ENCODE measurements at regions of chr1 and their contacts with region 1.

Region 1: GRCh38 chr1:84944767-84945486 is 51.9 kb upstream of the LPAR3 start:
- DNase-seq: peak; percentile 22 to 97 (median 73)
- ATAC-seq: peak; percentile 91
- H3K4me3 ChIP-seq: peak overlapping the region; percentile 54 to 75
- H3K4me3 Mint-ChIP-seq: peak overlapping the region; percentile 89
- H3K27ac ChIP-seq: peak overlapping the region; percentile 82 to 85
- H3K27ac Mint-ChIP-seq: peak overlapping the region; percentile 98
- H3K4me1 ChIP-seq: peaks cover 4% of the 10 kb centered on the region
- H3K4me1 Mint-ChIP-seq: peaks cover 16% of the 10 kb centered on the region
- H3K27me3 ChIP-seq: no peaks in the 10 kb centered on the region
- H3K27me3 Mint-ChIP-seq: no peaks in the 10 kb centered on the region
- CTCF ChIP-seq: peak; percentile 98

Region 2: GRCh38 chr1:84959294-84959693 is 14.4 kb after region 1 on chr1:
- CTCF ChIA-PET with region 1: interaction called, 12 read pairs
- POLR2A ChIA-PET with region 1: interaction called, 3 read pairs
- intact Hi-C with region 1: no loop called
- DNase-seq: peak in 2 of 9 experiments; percentile 35 to 75
- ATAC-seq: peak; percentile 73
- H3K4me3 ChIP-seq: no peak overlapping the region
- H3K4me3 Mint-ChIP-seq: no peak overlapping the region
- H3K27ac ChIP-seq: no peak overlapping the region
- H3K27ac Mint-ChIP-seq: no peak overlapping the region
- H3K4me1 ChIP-seq: no peaks in the 10 kb centered on the region
- H3K4me1 Mint-ChIP-seq: peaks cover 3% of the 10 kb centered on the region
- H3K27me3 ChIP-seq: no peaks in the 10 kb centered on the region
- H3K27me3 Mint-ChIP-seq: no peaks in the 10 kb centered on the region
- CTCF ChIP-seq: no peak

Region 3: GRCh38 chr1:85033221-85033620 is 88.3 kb after region 1 on chr1:
- CTCF ChIA-PET with region 1: interaction called, 123 read pairs
- POLR2A ChIA-PET with region 1: interaction called, 30 read pairs
- intact Hi-C with region 1: loop called in 1 of 2 experiments (anchors 1 kb)
- DNase-seq: no peak
- ATAC-seq: no peak
- H3K4me3 ChIP-seq: no peak overlapping the region
- H3K4me3 Mint-ChIP-seq: no peak overlapping the region
- H3K27ac ChIP-seq: no peak overlapping the region
- H3K27ac Mint-ChIP-seq: no peak overlapping the region
- H3K4me1 ChIP-seq: no peaks in the 10 kb centered on the region
- H3K4me1 Mint-ChIP-seq: no peaks in the 10 kb centered on the region
- H3K27me3 ChIP-seq: no peaks in the 10 kb centered on the region
- H3K27me3 Mint-ChIP-seq: peaks cover 11% of the 10 kb centered on the region
- CTCF ChIP-seq: no peak

Region 4: DNA sequence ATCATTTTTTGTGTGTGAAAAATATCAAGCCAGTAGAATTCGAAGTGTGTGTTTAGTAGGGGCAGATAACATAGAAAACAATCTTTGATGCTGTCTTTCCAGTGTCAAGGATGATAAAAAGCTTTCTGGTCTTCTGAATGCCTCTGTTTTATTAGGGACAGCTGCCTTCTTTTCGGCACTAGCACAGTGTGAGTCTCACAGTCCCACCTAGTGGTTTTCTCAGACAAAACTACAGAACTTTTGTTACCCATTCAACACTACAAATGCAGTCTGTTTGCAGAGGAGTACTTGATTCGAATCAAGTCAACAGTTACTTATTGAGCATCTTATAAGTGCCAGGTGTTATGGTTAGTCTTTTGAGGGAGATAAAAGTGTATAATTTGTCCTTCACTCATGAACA is 134.0 kb after region 1 on chr1:
- CTCF ChIA-PET with region 1: interaction called, 8 read pairs
- POLR2A ChIA-PET with region 1: no interaction called
- intact Hi-C with region 1: loop called in 1 of 2 experiments (anchors 1 kb)
- DNase-seq: no peak
- ATAC-seq: no peak
- H3K4me3 ChIP-seq: no peak overlapping the region
- H3K4me3 Mint-ChIP-seq: no peak overlapping the region
- H3K27ac ChIP-seq: no peak overlapping the region
- H3K27ac Mint-ChIP-seq: no peak overlapping the region
- H3K4me1 ChIP-seq: no peaks in the 10 kb centered on the region
- H3K4me1 Mint-ChIP-seq: no peaks in the 10 kb centered on the region
- H3K27me3 ChIP-seq: no peaks in the 10 kb centered on the region
- H3K27me3 Mint-ChIP-seq: peaks cover 7% of the 10 kb centered on the region
- CTCF ChIP-seq: no peak

Region 5: DNA sequence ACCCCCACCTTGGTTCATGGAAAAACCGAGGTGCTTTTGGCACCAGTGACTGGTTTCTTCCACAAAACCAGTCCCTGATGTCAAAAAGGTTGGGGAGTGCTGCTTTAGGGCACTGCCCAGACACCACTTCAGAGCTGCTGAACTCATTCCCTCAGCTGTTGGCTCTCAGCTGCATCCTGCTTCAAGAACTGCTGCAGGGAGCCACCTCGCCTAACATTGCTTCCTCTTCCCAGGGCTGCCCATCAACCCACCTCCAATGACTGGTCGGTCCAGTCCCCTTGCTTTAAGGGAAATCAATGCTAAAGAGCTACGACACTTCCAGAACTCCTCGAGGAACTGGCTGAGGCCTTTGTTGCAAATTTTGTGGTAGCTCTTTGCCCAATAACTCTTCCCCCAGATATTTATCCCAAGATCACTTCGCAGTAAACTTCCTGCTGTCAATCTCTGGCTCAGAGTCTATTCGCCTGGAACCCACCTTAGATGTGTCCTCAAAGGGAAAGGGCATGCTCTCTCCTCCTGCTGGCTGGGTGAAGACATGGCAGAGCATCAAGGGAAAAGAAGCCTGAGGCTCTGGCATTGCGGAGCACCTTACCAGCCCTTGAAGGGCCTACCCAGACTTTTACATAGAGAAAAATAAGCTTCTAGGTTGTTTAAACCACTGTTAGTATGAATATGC is 285.5 kb after region 1 on chr1:
- CTCF ChIA-PET with region 1: interaction called, 6 read pairs
- POLR2A ChIA-PET with region 1: no interaction called
- intact Hi-C with region 1: loop called in 1 of 2 experiments (anchors 1 kb)
- DNase-seq: peak in 3 of 9 experiments; percentile 25 to 44 (median 27)
- ATAC-seq: peak; percentile 64
- H3K4me3 ChIP-seq: no peak overlapping the region
- H3K4me3 Mint-ChIP-seq: no peak overlapping the region
- H3K27ac ChIP-seq: no peak overlapping the region
- H3K27ac Mint-ChIP-seq: no peak overlapping the region
- H3K4me1 ChIP-seq: no peaks in the 10 kb centered on the region
- H3K4me1 Mint-ChIP-seq: no peaks in the 10 kb centered on the region
- H3K27me3 ChIP-seq: peaks cover 0 to 3% of the 10 kb centered on the region in 2 experiments
- H3K27me3 Mint-ChIP-seq: peaks cover 3% of the 10 kb centered on the region
- CTCF ChIP-seq: peak; percentile 13

Region 6: GRCh38 chr1:85276215-85276977 is 331.5 kb after region 1 on chr1 and contains the start of gene BCL10:
- CTCF ChIA-PET with region 1: interaction called, 27 read pairs
- POLR2A ChIA-PET with region 1: interaction called, 16 read pairs
- intact Hi-C with region 1: loop called in 1 of 2 experiments (anchors 1 kb)
- DNase-seq: peak; percentile 95 to 99 (median 98)
- ATAC-seq: peak; percentile 94
- H3K4me3 ChIP-seq: peak within 1 kb of the TSS; percentile 72 to 80
- H3K4me3 Mint-ChIP-seq: peak within 1 kb of the TSS; percentile 86
- H3K27ac ChIP-seq: peak within 1 kb of the TSS; percentile 92 to 95
- H3K27ac Mint-ChIP-seq: peak within 1 kb of the TSS; percentile 94
- H3K4me1 ChIP-seq: peaks cover 35% of the 10 kb centered on the region
- H3K4me1 Mint-ChIP-seq: peaks cover 48% of the 10 kb centered on the region
- H3K27me3 ChIP-seq: no peaks in the 10 kb centered on the region
- H3K27me3 Mint-ChIP-seq: no peaks in the 10 kb centered on the region
- CTCF ChIP-seq: no peak
- total RNA-seq, gene BCL10: 48.2 to 51.7 TPM

Region 7: GRCh38 chr1:86018283-86018923 is 1073.5 kb after region 1 on chr1:
- CTCF ChIA-PET with region 1: interaction called, 3 read pairs
- POLR2A ChIA-PET with region 1: no interaction called
- intact Hi-C with region 1: loop called in 1 of 2 experiments (anchors 5 kb)
- DNase-seq: peak in 2 of 9 experiments; percentile 7 to 26
- ATAC-seq: no peak
- H3K4me3 ChIP-seq: no peak overlapping the region
- H3K4me3 Mint-ChIP-seq: no peak overlapping the region
- H3K27ac ChIP-seq: no peak overlapping the region
- H3K27ac Mint-ChIP-seq: no peak overlapping the region
- H3K4me1 ChIP-seq: no peaks in the 10 kb centered on the region
- H3K4me1 Mint-ChIP-seq: no peaks in the 10 kb centered on the region
- H3K27me3 ChIP-seq: no peaks in the 10 kb centered on the region
- H3K27me3 Mint-ChIP-seq: no peaks in the 10 kb centered on the region
- CTCF ChIP-seq: peak; percentile 59

Measured in CD8-positive, alpha-beta T cell (primary cell).